ENCODE measurements at regions of chr18 and their contacts with region 1.

Region 1: GRCh38 chr18:3665780-3666525 is 216.0 kb downstream of the TGIF1 start:
- DNase-seq: peak; percentile 81
- ATAC-seq: peak; percentile 64
- H3K4me3 Mint-ChIP-seq: peak overlapping the region; percentile 28
- H3K27ac Mint-ChIP-seq: peak overlapping the region; percentile 17
- H3K4me1 Mint-ChIP-seq: peaks cover 36% of the 10 kb centered on the region
- H3K27me3 Mint-ChIP-seq: no peaks in the 10 kb centered on the region

Region 2: DNA sequence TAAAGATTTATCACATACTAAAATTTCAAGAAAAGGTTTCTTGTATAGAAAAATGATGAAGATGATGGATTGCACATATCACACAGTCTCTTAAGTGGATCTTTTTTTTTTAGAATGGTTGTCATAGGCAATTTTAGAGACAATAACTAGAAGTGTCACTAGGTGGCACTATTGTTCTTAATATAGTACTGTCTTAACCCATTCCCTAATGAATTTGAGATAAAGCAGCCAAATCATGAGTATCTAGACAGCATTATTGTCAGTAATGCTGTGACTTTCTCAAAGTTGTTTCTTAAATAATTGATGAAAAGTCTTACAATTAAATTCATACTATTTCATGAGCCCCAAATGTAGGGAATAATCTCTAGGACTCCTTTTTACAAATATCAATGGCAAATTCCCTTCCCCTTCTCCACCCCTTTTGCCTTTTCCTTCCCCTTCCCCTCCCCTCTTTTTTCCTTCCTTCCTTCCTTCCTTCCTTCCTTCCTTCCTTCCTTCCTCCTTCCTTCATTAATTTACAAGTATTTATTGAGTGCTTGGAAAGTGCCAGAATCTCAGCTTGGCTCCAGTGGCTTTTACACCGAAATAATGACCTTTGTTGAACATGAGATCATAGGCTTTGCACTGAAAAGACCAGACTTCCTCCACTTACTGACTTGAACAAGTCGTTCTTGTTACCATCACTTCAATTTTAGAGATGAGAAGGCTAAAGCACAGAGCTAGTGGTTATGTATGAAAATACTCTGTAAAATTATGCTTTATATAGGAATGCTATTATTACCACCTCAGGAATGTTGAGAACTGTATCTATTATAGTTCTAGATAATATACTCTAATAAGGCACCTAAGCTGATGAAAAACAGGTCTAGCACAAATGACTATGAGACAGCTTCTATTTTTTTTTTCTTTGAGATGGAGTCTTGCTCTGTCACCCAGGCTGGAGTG is 384.2 kb before region 1 on chr18:
- CTCF ChIA-PET with region 1: interaction called, 158 read pairs
- POLR2A ChIA-PET with region 1: no interaction called
- intact Hi-C with region 1: loop called (anchors 1 kb)
- DNase-seq: no peak
- ATAC-seq: peak; percentile 90
- H3K4me3 Mint-ChIP-seq: no peak overlapping the region
- H3K27ac Mint-ChIP-seq: no peak overlapping the region
- H3K4me1 Mint-ChIP-seq: peaks cover 10% of the 10 kb centered on the region
- H3K27me3 Mint-ChIP-seq: no peaks in the 10 kb centered on the region

Region 3: DNA sequence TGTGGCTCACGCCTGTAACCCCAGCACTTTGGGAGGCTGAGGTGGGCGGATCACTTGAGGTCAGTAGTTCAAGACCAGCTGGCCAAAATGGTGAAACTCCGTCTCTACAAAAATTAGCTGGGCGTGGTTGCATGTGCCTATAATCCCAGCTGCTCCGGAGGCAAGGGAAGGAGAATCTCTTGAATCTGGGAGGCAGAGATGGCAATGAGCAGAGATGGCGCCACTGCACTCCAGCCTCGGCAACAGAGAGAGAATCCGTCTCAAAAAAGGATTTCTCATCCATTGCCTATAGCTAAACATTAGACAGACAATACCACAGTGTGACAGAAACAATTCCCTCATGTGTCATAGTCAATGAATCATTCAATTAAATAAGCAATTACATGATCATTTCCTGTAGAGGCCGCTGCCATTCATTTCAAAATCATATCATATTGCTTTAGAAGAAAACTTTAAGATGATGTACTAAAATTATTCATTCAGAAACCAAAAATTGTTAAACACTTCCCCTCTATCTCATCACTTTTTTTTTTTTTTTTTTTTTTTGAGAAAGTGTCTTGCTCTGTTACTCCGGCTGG is 285.5 kb before region 1 on chr18:
- CTCF ChIA-PET with region 1: interaction called, 14 read pairs
- POLR2A ChIA-PET with region 1: no interaction called
- intact Hi-C with region 1: loop called in 1 of 2 experiments (anchors 1 kb)
- DNase-seq: peak; percentile 49
- ATAC-seq: peak; percentile 97
- H3K4me3 Mint-ChIP-seq: no peak overlapping the region
- H3K27ac Mint-ChIP-seq: no peak overlapping the region
- H3K4me1 Mint-ChIP-seq: peaks cover 10% of the 10 kb centered on the region
- H3K27me3 Mint-ChIP-seq: peaks cover 10% of the 10 kb centered on the region

Region 4: DNA sequence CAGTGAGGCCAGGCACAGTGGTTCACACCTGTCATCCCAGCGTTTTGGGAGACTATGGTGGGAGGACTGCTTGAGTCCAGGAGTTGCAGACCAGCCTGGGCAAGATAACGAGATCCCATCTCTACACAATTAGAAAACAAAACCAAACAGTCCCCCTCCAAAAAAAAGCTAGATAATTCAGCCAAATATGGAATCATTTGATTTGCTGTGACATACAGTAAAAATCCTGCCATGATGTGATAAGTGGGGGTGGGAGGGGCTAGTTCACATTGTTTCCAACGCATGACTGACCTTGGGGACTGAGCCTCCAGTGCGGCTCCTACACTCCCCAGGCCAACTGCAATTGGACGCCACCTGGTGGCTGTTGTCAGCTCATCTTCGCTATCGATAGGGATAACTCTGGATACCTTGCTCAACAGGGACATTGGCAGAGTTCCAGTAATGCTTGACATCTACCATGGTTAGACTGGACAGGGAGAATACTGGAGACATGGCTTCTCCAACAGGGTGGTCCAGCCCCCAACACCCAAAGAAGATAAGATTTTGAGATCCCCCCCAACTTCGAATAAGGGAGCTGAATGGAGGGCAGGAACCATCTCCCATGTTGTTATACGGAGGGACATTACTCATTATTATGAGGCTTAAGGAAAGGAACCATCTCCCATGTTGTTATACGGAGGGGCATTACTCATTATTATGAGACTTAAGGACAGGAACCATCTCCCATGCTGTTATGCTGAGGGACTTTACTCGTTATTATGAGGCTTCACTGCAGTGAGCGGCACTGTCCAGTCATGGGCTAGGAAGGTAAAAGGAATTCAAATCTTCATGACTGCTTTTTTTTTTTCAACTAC is 80.1 kb before region 1 on chr18:
- CTCF ChIA-PET with region 1: interaction called, 19 read pairs
- POLR2A ChIA-PET with region 1: interaction called, 3 read pairs
- intact Hi-C with region 1: loop called in 1 of 2 experiments (anchors 2 kb)
- DNase-seq: peak; percentile 88
- ATAC-seq: peak; percentile 72
- H3K4me3 Mint-ChIP-seq: no peak overlapping the region
- H3K27ac Mint-ChIP-seq: peak overlapping the region; percentile 59
- H3K4me1 Mint-ChIP-seq: peaks cover 46% of the 10 kb centered on the region
- H3K27me3 Mint-ChIP-seq: no peaks in the 10 kb centered on the region

Region 5: GRCh38 chr18:3652380-3653262 is 13.3 kb before region 1 on chr18:
- CTCF ChIA-PET with region 1: interaction called, 19 read pairs
- POLR2A ChIA-PET with region 1: no interaction called
- intact Hi-C with region 1: loop called in 1 of 2 experiments (anchors 1 kb)
- DNase-seq: peak; percentile 90
- ATAC-seq: peak; percentile 97
- H3K4me3 Mint-ChIP-seq: peak overlapping the region; percentile 27
- H3K27ac Mint-ChIP-seq: peak overlapping the region; percentile 91
- H3K4me1 Mint-ChIP-seq: peaks cover 46% of the 10 kb centered on the region
- H3K27me3 Mint-ChIP-seq: no peaks in the 10 kb centered on the region

Measured in activated CD4-positive, alpha-beta T cell treated with anti-CD3 and anti-CD28 coated beads for 36 hours (primary cell).